A673 (cell line): ENCODE measurements at regions of chr6 and their contacts with region 1.

Region 1: GRCh38 chr6:139356924-139357323 is 17.5 kb downstream of the CITED2 start:
- DNase-seq: no peak
- H3K4me3 ChIP-seq: no peak overlapping the region
- H3K27ac ChIP-seq: no peak overlapping the region
- H3K4me1 ChIP-seq: no peaks in the 10 kb centered on the region
- H3K27me3 ChIP-seq: no peaks in the 10 kb centered on the region
- CTCF ChIP-seq: no peak

Region 2: GRCh38 chr6:139334806-139335446 is 22.0 kb before region 1 on chr6:
- CTCF ChIA-PET with region 1: no interaction called
- POLR2A ChIA-PET with region 1: interaction called, 12 read pairs
- intact Hi-C with region 1: no loop called
- DNase-seq: peak; percentile 22
- H3K4me3 ChIP-seq: no peak overlapping the region
- H3K27ac ChIP-seq: no peak overlapping the region
- H3K4me1 ChIP-seq: no peaks in the 10 kb centered on the region
- H3K27me3 ChIP-seq: no peaks in the 10 kb centered on the region
- CTCF ChIP-seq: no peak